Panc1 (cell line): ENCODE measurements at regions of chr2 and their contacts with region 1.

Region 1: DNA sequence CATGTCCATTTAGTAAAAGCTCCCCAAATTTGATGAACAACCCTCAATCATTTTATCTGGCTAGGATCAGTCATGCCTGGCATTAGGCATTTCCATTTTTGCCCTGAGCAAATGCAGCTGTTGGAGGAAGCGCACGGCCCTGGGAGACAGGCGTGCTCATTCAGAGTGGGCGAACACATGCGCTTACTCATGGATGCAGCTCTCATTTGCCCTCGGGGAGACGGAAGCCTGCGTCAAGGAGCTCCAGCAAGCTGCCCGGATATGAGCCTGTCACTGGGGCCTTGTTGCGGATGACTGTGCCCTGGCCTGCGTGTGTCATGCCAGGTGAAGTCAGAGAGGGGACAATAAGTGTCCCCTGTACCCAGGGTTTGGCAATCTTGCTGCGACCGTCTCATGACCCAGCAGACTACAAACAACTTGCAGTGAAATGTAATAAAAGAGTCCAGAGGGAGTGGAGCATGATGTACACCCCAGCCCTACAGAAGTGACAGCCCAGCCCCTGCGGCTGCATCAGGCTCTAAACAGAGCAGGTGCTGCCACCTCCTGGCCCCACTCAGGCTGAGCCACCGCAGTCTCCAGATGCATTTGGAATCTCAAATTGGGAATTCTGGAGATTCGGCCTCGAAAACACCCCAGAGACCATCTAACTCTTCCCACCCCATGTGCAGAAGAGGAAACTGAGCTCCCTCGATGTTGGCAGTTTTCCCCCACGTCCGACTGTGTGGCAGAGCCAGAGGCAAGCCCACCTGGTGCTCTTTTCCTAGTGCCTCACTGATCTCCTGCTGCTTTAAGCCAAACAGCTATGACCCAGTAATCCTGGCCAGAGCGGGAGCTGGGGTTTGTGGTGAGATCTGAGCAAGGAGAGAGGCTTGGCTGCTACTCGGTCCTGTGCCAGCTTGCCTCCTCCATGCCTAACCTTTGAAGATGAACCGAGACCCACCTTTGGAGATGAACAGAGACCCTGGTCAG is 105.0 kb upstream of the ALK start:
- DNase-seq: peak; percentile 13
- ATAC-seq: peak; percentile 95
- H3K4me3 ChIP-seq: no peak overlapping the region
- H3K27ac ChIP-seq: no peak overlapping the region
- H3K4me1 ChIP-seq: no peaks in the 10 kb centered on the region
- H3K27me3 ChIP-seq: peaks cover 15% of the 10 kb centered on the region
- CTCF ChIP-seq: peak; percentile 80

Region 2: DNA sequence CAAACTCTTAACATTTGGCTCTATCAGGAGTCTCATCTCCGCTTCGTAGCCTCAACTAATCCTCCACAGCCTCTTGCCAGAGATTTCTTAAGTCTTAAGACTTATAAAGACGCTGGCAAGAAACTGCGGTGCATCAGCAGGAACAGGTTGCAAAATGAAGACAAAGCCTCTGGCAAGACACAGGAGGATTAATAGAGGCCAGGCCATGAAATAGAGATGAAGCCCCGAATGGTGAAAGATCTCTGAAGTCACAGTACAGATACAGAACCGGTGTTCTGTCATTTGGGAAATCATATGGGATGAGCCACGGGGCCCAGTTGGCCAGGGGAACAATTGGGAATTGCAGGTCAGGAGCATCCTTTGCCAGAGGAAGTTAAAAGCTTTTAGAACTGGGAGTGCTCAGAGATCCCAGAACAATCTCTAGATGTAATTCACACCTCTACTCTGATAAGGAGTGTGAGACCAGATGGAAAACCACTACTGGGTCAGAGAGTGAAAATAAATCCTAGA is 1824.6 kb before region 1 on chr2:
- CTCF ChIA-PET with region 1: no interaction called
- POLR2A ChIA-PET with region 1: no interaction called
- in situ Hi-C with region 1: no loop called
- intact Hi-C with region 1: no loop called
- DNase-seq: no peak
- ATAC-seq: no peak
- H3K4me3 ChIP-seq: no peak overlapping the region
- H3K27ac ChIP-seq: no peak overlapping the region
- H3K4me1 ChIP-seq: no peaks in the 10 kb centered on the region
- H3K27me3 ChIP-seq: no peaks in the 10 kb centered on the region
- CTCF ChIP-seq: no peak

Region 3: DNA sequence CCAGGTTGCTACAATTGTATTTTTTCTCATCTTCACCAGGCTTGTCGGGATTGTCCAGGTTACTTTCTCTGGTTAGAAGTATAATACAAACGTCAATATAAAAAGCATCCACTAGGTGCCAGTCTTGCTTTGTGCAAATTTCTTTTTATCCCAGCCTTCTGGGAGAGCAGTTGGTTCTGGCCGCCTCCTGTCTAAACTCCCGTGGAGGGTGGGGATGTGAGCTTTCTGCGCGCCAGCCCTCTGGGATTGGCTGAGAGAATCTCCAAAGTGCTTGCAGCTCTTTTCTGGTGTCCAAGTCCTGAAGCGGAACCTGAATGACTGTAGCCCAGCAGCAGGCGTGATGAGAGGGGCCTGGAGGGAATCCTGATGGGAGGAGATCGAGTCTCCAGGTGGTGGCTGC is 1067.7 kb before region 1 on chr2:
- CTCF ChIA-PET with region 1: no interaction called
- POLR2A ChIA-PET with region 1: no interaction called
- in situ Hi-C with region 1: no loop called
- intact Hi-C with region 1: loop called (anchors 5 kb)
- DNase-seq: peak; percentile 59
- ATAC-seq: peak; percentile 82
- H3K4me3 ChIP-seq: no peak overlapping the region
- H3K27ac ChIP-seq: no peak overlapping the region
- H3K4me1 ChIP-seq: peaks cover 12% of the 10 kb centered on the region
- H3K27me3 ChIP-seq: no peaks in the 10 kb centered on the region
- CTCF ChIP-seq: peak; percentile 81

Region 4: DNA sequence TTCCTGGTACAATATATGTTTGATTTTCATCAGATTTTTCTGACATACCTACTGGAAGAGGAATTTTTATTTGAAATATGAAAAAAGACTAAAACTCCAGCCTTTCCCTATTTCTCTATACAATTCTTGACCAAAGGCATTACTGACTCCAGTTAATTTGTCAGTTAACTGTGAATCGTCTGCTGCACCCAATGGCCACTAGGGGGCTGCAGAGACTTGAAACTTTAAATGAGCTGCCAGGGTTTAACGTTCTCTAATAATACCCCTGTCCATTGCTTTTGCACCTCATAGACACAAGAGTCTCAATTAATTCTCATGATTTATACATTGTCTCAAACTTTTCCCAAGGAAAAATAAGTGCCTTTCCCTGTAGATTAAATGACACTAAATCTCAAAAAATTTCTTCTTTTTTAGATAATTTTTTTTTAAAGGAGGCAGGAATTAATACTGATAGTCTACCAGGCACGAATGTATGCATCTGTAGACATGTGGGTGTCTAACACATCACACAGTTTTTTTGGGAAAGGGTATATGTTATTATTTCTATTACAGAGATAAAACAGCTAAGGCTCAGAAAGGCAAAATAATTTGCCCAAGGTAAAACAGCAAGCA is 103.2 kb before region 1 on chr2:
- CTCF ChIA-PET with region 1: interaction called, 3 read pairs
- POLR2A ChIA-PET with region 1: no interaction called
- in situ Hi-C with region 1: no loop called
- intact Hi-C with region 1: loop called (anchors 1 kb)
- DNase-seq: peak; percentile 38
- ATAC-seq: peak; percentile 71
- H3K4me3 ChIP-seq: no peak overlapping the region
- H3K27ac ChIP-seq: no peak overlapping the region
- H3K4me1 ChIP-seq: no peaks in the 10 kb centered on the region
- H3K27me3 ChIP-seq: peaks cover 31% of the 10 kb centered on the region
- CTCF ChIP-seq: peak; percentile 89

Region 5: DNA sequence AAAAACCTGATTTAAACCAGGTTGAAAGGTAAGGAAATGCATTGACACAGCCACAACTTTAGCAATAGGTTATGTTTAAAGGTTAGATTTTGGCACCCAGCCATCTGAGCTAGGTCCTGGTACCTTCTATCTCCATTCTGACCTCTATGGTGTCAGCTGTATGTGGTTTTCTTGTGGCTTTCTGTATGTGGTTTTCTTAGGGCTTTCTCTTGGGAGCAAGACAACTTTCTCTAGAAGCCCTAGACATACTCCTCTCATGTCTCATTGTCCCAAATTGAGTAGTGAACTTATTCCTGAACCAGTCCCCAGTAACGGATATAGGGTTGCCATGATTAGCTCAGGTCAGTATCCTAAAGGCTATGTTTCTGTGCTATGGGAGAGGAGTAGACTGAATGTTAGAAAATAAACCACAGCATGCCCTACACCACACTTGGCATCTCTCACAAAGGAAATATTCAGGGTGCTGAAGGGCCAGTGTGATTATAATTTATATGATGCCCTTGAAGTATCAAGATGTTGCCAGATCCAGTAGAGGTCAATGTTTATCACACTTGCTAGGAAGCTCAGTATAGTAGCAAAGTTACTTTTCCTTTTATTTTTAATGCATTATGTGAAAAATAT is 604.8 kb after region 1 on chr2:
- CTCF ChIA-PET with region 1: no interaction called
- POLR2A ChIA-PET with region 1: no interaction called
- in situ Hi-C with region 1: no loop called
- intact Hi-C with region 1: no loop called
- DNase-seq: no peak
- ATAC-seq: no peak
- H3K4me3 ChIP-seq: no peak overlapping the region
- H3K27ac ChIP-seq: no peak overlapping the region
- H3K4me1 ChIP-seq: no peaks in the 10 kb centered on the region
- H3K27me3 ChIP-seq: no peaks in the 10 kb centered on the region
- CTCF ChIP-seq: no peak